Caco-2 (cell line): ENCODE measurements at regions of chr1 and their contacts with region 1.

Region 1: DNA sequence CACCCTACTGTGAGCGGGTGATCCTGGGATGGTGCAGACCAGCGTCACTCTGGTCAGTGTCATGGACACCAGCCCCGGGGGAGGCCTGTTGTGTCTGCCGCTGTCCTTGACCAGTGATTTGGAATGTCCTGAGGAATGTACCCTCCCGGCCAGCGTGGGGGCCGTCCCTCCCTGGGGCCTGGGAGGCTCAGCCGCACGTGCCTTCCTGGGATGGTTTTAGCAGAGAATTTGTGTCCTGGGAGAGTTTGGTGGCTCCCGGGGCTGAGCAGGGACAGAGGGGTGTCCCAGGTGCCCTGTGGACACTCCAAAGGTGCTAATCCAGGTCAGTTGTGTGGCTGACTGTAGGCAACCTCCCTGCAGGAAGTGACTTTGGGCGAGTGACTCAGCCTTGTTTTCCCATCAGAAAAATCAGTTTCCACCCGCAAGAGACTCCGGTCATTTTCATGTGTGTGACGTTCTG is 6.2 kb downstream of the ARHGEF16 start:
- DNase-seq: peak; percentile 47 to 69
- H3K4me3 ChIP-seq: no peak overlapping the region
- H3K4me3 Mint-ChIP-seq: peak overlapping the region; percentile 73
- H3K27ac Mint-ChIP-seq: peak overlapping the region; percentile 97
- H3K4me1 ChIP-seq: peaks cover 60% of the 10 kb centered on the region
- H3K4me1 Mint-ChIP-seq: peaks cover 34% of the 10 kb centered on the region
- H3K27me3 ChIP-seq: no peaks in the 10 kb centered on the region
- H3K27me3 Mint-ChIP-seq: no peaks in the 10 kb centered on the region
- CTCF ChIP-seq: no peak

Region 2: DNA sequence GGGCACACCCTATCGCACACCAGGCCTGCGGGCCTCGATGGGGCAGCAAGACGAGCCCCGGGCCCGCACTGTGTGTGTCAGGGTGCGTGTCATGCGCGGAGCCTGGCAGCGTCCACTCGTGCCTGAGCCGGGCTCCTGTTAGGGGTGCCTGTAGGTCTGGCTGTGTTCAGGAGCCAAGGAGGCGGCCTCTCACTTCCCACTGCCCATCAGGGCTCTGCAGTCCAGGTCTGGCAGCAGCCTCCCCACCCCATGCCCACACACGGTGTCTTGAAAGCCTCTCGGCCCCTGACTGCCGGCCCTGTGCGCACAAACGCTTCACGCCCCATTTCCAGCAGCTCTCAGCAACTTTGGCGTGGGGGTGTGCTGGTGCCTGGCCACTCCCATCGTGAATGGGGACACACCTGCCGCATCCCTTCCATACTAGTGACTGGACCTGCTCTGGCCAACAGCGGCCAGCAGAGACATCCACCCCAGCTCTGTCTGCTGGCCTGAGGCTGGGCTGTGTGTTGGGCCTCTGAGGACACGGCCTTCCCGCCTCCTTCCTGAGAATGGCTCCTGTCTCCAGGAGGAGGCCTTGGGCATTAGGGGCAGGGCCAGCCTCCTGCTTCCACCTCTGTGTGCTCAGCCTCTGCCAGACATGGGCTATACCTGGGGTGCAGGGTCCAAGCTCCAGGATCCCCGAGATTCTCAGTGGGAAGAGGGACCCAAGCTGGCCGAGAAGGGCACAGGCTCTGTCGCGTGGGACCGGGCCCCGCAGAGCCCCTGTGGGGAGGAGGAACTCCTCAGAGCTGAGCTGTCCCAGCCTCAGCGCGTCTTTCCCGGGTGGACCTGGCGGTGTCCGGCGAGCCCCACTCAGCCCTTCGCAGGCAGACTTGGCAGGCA is 481.3 kb before region 1 on chr1:
- CTCF ChIA-PET with region 1: no interaction called
- POLR2A ChIA-PET with region 1: no interaction called
- intact Hi-C with region 1: no loop called
- DNase-seq: no peak
- H3K4me3 ChIP-seq: no peak overlapping the region
- H3K4me3 Mint-ChIP-seq: no peak overlapping the region
- H3K27ac Mint-ChIP-seq: no peak overlapping the region
- H3K4me1 ChIP-seq: no peaks in the 10 kb centered on the region
- H3K4me1 Mint-ChIP-seq: no peaks in the 10 kb centered on the region
- H3K27me3 ChIP-seq: no peaks in the 10 kb centered on the region
- H3K27me3 Mint-ChIP-seq: peaks cover 5% of the 10 kb centered on the region
- CTCF ChIP-seq: no peak

Region 3: DNA sequence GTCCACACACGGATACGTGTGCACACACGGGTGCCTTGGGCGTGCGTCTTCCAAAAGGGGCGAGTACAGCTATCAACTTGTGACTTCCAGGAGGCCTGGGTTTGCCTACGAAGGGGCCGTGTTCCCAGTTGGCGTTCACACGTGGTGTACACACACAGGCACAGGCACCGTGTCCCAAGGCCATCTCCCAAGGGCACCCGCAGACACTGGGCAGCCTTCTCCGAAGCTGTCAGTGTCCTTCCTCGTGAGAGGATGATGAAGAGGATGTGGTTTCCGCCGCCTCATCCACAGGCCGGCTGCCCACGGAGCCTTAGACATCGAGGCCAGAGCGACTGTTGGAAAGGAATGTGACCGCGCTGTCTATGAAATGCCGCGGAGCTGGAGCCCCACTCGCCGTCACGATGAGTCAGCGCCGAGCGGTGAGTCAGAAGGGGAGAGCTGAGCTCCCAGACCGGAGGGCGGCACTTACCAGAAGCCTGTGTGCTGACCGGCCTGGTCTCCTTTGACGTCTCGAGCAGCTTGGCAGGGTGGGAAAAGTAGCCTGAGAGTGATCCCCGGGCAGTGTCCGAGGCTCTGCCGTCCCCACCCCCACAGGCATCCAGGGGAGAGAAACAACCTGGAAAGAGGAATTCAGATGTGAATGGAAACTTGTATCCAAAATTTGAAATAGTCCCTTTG is 147.7 kb before region 1 on chr1:
- CTCF ChIA-PET with region 1: no interaction called
- POLR2A ChIA-PET with region 1: no interaction called
- intact Hi-C with region 1: no loop called
- DNase-seq: peak; percentile 76 to 88
- H3K4me3 ChIP-seq: no peak overlapping the region
- H3K4me3 Mint-ChIP-seq: no peak overlapping the region
- H3K27ac Mint-ChIP-seq: peak overlapping the region; percentile 84
- H3K4me1 ChIP-seq: peaks cover 19% of the 10 kb centered on the region
- H3K4me1 Mint-ChIP-seq: peaks cover 16% of the 10 kb centered on the region
- H3K27me3 ChIP-seq: no peaks in the 10 kb centered on the region
- H3K27me3 Mint-ChIP-seq: no peaks in the 10 kb centered on the region
- CTCF ChIP-seq: no peak

Region 4: DNA sequence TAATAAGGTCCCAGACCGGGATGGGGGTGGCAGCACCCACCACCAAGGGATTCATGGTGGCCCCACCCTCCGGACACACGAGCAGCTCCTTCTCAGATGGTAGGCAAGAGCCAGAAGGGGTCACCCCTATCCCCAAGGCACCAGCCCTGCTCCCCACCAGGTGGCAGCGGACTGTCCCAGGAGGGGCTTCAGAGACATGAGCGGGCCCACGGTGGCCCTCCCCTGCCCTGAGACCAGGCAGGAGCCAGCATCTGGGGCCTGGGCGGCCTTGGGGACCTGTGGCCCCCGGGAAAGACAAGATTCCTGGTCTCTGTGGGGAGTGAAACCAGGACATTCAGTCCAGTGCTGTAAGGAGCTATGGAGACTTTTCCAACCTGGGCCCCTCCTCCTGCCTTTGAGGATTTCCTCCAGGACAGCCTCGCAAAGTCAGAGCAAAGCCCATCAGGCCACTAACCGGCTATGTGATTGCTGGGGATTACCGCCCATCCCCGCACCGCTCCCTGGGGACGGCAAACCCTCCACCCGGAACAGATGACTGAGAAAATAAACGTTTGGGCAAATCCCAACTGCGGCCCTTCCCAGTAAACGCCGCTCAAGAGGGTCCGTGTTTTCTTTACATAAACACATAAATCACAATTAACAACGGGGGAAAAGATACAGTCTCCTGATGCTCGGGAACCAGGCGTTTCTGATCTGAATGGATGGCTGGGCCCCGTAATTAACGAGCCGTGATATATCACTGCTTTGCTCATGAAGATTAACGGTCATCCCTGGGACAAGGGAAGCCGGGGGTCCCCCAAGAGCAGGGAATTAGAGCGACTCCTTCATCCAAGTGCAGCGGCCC is 57.1 kb before region 1 on chr1:
- CTCF ChIA-PET with region 1: no interaction called
- POLR2A ChIA-PET with region 1: no interaction called
- intact Hi-C with region 1: no loop called
- DNase-seq: peak in 1 of 2 experiments; percentile 13
- H3K4me3 ChIP-seq: no peak overlapping the region
- H3K4me3 Mint-ChIP-seq: no peak overlapping the region
- H3K27ac Mint-ChIP-seq: no peak overlapping the region
- H3K4me1 ChIP-seq: no peaks in the 10 kb centered on the region
- H3K4me1 Mint-ChIP-seq: no peaks in the 10 kb centered on the region
- H3K27me3 ChIP-seq: no peaks in the 10 kb centered on the region
- H3K27me3 Mint-ChIP-seq: no peaks in the 10 kb centered on the region
- CTCF ChIP-seq: peak; percentile 25 to 36

Region 5: DNA sequence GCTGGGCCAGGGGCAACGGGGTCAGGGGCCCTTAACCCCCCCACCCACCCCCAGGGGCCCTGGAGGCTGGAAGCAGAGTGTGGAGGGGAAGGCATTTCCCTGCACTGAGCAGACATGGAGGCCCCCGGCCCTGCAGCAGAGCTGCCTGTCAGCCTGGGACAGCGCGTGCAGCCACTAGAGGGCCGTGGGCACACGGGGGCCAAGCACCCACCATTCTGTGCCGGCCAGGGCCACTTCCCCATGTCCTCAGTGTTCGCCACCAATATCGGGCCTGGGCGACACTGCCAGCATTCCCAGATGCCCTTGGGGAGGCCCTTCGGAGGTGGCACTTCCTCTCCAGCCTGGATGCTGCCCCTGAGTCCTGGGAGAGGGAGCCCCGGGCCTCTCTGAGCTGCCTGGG is 29.4 kb before region 1 on chr1:
- CTCF ChIA-PET with region 1: no interaction called
- POLR2A ChIA-PET with region 1: no interaction called
- intact Hi-C with region 1: no loop called
- DNase-seq: peak in 1 of 2 experiments; percentile 48
- H3K4me3 ChIP-seq: no peak overlapping the region
- H3K4me3 Mint-ChIP-seq: no peak overlapping the region
- H3K27ac Mint-ChIP-seq: no peak overlapping the region
- H3K4me1 ChIP-seq: no peaks in the 10 kb centered on the region
- H3K4me1 Mint-ChIP-seq: no peaks in the 10 kb centered on the region
- H3K27me3 ChIP-seq: no peaks in the 10 kb centered on the region
- H3K27me3 Mint-ChIP-seq: peaks cover 3% of the 10 kb centered on the region
- CTCF ChIP-seq: peak in 1 of 2 experiments; percentile 46

Region 6: GRCh38 chr1:3471302-3472087 is 10.8 kb after region 1 on chr1:
- CTCF ChIA-PET with region 1: interaction called, 7 read pairs
- POLR2A ChIA-PET with region 1: no interaction called
- intact Hi-C with region 1: loop called (anchors 1 kb)
- DNase-seq: peak; percentile 82 to 88
- H3K4me3 ChIP-seq: no peak overlapping the region
- H3K4me3 Mint-ChIP-seq: no peak overlapping the region
- H3K27ac Mint-ChIP-seq: peak overlapping the region; percentile 95
- H3K4me1 ChIP-seq: peaks cover 18% of the 10 kb centered on the region
- H3K4me1 Mint-ChIP-seq: peaks cover 10% of the 10 kb centered on the region
- H3K27me3 ChIP-seq: no peaks in the 10 kb centered on the region
- H3K27me3 Mint-ChIP-seq: no peaks in the 10 kb centered on the region
- CTCF ChIP-seq: peak; percentile 58 to 71